HAP-1 (cell line): ENCODE measurements at regions of chr4 and their contacts with region 1.

Region 1: GRCh38 chr4:57158221-57158620 is 48.0 kb upstream of the IGFBP7 start:
- DNase-seq: no peak
- H3K4me3 ChIP-seq: no peak overlapping the region
- H3K4me1 ChIP-seq: no peaks in the 10 kb centered on the region
- H3K27me3 ChIP-seq: peaks cover 4% of the 10 kb centered on the region

Region 2: DNA sequence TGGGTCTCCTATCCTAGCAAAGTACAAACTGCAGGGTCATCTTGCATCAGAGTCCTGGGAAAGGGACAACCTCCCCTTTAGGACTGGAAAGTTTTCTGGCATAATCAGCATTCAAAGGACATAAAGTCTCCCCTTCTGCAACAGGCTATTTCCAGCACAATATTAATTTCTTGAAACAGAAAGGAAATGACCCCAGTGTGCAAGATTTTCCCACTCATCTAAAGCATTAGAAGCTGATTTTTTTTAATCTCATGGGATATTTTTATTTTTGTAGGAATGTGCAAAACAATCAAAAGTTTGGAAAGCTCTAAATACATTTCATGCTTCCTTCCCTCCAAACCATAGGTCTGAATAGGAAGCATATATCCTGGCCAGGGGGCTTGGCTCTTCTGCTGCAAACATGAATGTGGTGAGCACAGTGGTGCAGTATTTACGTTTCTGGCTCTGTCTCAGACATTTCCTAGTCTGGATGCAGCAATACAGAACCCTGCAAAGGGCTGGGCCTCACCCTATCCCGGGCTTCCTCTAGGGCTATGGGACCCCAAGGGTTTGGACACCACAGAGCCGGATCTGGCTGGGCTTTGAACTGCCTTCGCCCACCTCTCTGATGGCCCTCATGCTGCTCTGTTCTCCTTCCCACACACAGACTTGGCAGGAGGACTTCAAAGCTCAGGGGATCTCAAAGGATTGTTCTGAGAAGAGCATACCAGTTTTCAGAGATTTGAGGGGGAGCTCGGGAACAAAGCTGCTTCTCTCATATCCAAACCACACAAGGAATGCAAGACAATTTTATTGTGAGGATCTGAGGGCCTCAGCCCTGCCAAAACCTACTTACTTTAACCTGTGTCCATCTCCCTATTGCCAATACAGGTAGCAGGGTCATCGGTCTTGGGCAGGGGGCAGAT is 114.6 kb before region 1 on chr4:
- in situ Hi-C with region 1: loop called (anchors 10 kb)
- DNase-seq: no peak
- H3K4me3 ChIP-seq: no peak overlapping the region
- H3K4me1 ChIP-seq: no peaks in the 10 kb centered on the region
- H3K27me3 ChIP-seq: peaks cover 10% of the 10 kb centered on the region